ENCODE measurements at regions of chr22 and their contacts with region 1.

Region 1: GRCh38 chr22:50293441-50294318 is 13.8 kb downstream of the PLXNB2 start:
- DNase-seq: peak; percentile 42
- ATAC-seq: peak; percentile 54
- H3K4me3 Mint-ChIP-seq: peak overlapping the region; percentile 66
- H3K27ac Mint-ChIP-seq: peak overlapping the region; percentile 81
- H3K4me1 Mint-ChIP-seq: peaks cover 25% of the 10 kb centered on the region
- H3K27me3 Mint-ChIP-seq: no peaks in the 10 kb centered on the region

Region 2: DNA sequence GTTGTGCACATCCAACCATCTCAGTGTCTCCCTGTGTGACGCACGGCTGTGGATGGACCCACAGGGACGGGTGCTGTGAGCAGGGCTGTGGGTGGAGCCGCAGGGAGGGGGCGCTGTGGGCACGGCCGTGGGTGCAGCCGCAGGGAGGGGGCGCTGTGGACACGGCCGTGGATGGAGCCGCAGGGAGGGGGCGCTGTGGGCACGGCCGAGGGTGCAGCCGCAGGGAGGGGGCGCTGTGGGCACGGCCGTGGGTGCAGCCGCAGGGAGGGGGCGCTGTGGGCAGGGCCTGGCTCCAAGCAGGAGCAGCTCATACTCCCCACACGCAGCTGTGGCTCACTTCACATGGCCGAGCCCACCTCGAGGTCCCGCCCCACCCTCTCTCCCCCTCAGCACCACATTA is 17.5 kb before region 1 on chr22:
- CTCF ChIA-PET with region 1: interaction called, 19 read pairs
- POLR2A ChIA-PET with region 1: interaction called, 3 read pairs
- DNase-seq: peak; percentile 63
- ATAC-seq: peak; percentile 59
- H3K4me3 Mint-ChIP-seq: no peak overlapping the region
- H3K27ac Mint-ChIP-seq: no peak overlapping the region
- H3K4me1 Mint-ChIP-seq: peaks cover 9% of the 10 kb centered on the region
- H3K27me3 Mint-ChIP-seq: peaks cover 8% of the 10 kb centered on the region

Region 3: GRCh38 chr22:50303848-50304527 is 10.3 kb after region 1 on chr22:
- CTCF ChIA-PET with region 1: interaction called, 8 read pairs
- POLR2A ChIA-PET with region 1: interaction called, 23 read pairs
- DNase-seq: peak; percentile 37
- ATAC-seq: peak; percentile 14
- H3K4me3 Mint-ChIP-seq: peak overlapping the region; percentile 18
- H3K27ac Mint-ChIP-seq: peak overlapping the region; percentile 34
- H3K4me1 Mint-ChIP-seq: peaks cover 38% of the 10 kb centered on the region
- H3K27me3 Mint-ChIP-seq: peaks cover 2% of the 10 kb centered on the region